IMR-90 (cell line): ENCODE measurements at regions of chr11 and their contacts with region 1.

Region 1: DNA sequence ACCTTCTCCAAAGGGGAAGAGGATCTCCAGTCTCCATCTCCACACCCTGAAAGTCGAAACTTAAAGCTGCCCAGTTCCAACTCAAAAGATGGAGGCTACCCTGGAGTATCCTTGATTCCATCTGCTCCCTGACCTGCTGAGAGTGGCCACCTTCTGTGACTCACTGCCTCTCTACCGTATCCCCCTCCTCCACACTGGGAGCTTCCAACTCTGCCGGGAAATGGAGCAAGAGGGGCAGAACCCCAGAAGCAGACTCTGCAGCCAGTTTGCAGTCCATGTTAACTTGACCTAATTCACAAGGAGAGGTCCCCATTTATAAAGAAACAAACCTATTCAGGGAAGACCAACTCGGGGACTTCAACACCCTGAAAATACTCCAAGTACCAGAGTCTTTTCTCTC is 22.0 kb upstream of the IRAG1 start:
- DNase-seq: no peak
- ATAC-seq: peak; percentile 22
- H3K4me3 ChIP-seq: no peak overlapping the region
- H3K27ac ChIP-seq: no peak overlapping the region
- H3K4me1 ChIP-seq: peaks cover 17% of the 10 kb centered on the region
- H3K27me3 ChIP-seq: no peaks in the 10 kb centered on the region
- CTCF ChIP-seq: no peak
- POLR2A ChIP-seq: no peak
- RAD21 ChIP-seq: no peak

Region 2: GRCh38 chr11:10699072-10699471 is 16.5 kb before region 1 on chr11:
- CTCF ChIA-PET with region 1: no interaction called
- POLR2A ChIA-PET with region 1: interaction called, 8 read pairs
- dilution Hi-C with region 1: no loop called
- in situ Hi-C with region 1: no loop called
- intact Hi-C with region 1: loop called (anchors 2 kb)
- DNase-seq: no peak
- ATAC-seq: no peak
- H3K4me3 ChIP-seq: no peak overlapping the region
- H3K27ac ChIP-seq: no peak overlapping the region
- H3K4me1 ChIP-seq: peaks cover 16% of the 10 kb centered on the region
- H3K27me3 ChIP-seq: no peaks in the 10 kb centered on the region
- CTCF ChIP-seq: no peak
- POLR2A ChIP-seq: no peak
- RAD21 ChIP-seq: no peak